ENCODE measurements at regions of chr13 and their contacts with region 1.

Region 1: GRCh38 chr13:41456768-41457588 is at the start of gene RGCC:
- DNase-seq: peak; percentile 88
- ATAC-seq: peak; percentile 82
- total RNA-seq, gene RGCC: 138 TPM

Region 2: DNA sequence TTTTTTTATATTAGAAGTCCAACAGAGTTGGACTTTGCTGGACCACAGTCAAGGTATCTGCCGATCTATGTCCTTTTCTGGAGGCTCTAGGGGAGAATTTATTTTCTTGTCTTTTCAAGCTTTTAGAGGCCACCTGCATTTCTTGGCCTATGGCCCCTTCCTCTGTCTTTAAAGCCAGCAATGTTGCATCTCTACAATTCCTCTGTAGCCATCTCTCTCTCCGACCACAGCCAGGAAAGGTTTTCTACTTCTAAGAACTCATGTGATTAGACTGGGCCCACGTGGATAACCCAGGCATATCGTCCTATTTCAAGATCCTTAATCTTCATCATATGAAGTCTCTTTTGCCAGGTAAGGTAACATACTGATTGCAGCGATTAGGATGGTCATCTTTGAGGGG is 43.1 kb before region 1 on chr13:
- intact Hi-C with region 1: loop called (anchors 2 kb)
- DNase-seq: no peak
- ATAC-seq: no peak

Region 3: DNA sequence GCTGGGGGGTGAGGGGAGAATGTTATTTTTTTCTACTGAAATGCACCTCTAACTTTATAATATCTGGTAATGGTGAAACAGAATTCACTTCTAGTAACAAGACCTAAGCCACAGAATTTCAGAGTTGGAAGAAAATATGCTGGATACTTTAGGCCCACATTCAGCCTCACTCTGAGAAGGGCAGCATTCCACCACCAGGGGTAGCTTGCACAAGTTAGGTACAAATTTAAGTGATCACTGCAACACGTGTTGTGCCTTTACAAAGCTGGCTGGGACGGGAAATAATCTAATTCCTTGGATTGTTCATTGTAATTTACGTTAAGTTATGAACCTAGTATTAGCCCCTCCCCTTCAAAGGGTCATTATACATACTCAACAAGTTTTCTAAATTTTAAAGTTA is 192.7 kb after region 1 on chr13:
- intact Hi-C with region 1: loop called (anchors 10 kb)
- DNase-seq: no peak
- ATAC-seq: no peak

Region 4: GRCh38 chr13:41827507-41828213 is 370.7 kb after region 1 on chr13:
- intact Hi-C with region 1: no loop called
- DNase-seq: no peak
- ATAC-seq: peak; percentile 86

Measured in sciatic nerve (tissue), 2 donors.